ENCODE measurements at regions of chr16 and their contacts with region 1.

Region 1: DNA sequence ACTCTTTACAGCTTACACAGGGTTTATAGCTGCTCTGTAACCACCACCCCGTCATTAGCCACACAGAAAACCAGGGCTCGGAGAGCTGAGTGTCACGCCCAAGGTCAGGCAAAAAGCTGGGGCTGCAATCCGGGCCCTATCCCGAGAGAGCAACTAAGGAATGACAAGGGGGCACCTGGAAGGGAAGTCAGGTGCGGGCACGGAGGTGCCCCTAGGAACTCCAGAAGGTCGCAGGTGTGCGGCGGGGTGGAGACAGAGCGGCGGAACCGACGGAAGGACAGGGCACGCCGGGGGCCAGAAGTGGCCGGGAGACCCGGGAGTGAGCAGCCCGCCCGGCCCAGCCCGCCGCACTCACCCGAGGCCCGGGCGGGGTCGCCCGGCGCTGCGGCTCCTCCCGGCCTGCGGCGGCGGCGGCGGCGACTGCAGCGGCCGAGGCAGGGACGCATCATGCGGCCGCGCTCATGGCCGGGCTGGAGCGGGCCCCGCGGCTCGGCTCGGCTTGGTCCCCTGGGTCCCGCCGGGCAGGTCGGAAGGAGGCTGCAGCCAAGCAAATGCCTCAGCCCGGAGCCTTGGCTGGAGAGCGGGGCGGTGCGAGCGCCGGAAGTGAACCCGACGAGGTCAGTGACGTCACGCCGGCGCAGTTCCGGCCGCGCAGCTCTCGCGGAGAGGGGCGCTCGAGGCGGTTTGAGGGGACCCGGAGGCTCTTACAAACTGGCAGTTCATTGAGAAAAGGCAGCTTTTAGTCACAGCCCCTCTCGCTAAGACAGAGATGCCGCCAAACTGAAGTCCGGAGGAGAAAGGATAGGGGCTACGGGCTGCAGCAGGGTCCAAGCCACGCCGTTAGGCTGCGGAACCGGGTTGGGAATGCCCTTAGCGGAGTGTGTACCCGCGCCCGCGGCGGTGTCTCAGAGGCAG is at the start of gene ZDHHC7:
- DNase-seq: peak; percentile 87
- H3K4me3 Mint-ChIP-seq: peak within 1 kb of the TSS; percentile 98
- H3K27ac Mint-ChIP-seq: peak within 1 kb of the TSS; percentile 94
- H3K4me1 Mint-ChIP-seq: peaks cover 38% of the 10 kb centered on the region
- H3K27me3 Mint-ChIP-seq: peaks cover 2% of the 10 kb centered on the region
- total RNA-seq, gene ZDHHC7: 24.6 to 25.1 TPM

Region 2: DNA sequence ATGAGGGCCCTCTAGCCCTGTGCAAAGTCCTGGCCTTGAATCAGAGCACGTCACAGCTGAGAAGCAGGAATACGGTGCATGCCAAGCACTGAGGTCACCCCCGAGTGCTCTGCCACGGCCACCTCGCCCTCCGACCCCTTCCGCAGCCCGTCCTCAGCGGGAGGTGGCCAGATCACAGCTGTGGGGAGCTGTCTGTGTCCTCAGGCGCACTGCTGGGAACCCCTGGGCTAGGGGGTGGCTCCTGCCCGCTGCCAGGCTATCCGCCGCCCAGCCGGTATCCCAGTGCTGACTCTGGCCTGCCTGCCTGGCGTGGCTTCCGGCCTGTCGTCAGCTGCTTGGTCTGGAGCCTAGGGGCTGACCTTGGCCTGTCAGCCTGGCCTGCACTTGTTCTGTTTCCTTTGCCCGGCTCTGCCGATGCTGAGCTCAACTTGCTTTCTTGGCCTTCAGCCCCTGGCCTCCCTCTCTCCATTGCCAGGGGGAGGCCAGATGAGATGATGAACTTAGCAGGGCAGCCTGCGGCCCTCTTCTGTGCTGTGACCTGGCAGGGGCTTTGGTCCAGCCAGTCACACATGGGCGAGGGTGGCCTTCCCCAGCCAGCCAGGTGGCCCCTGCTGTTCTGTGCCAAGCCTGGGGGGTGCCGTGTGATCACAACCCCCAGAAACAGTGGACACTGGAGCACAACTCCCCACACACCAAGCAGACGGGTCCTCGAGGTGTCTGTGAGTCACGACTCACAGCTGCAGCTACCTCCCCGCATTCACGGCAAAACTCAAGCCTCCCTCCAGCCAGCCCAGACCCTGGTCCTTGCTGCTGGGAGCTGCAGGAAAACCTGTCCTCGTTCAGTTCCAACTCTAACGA is 77.2 kb before region 1 on chr16:
- CTCF ChIA-PET with region 1: no interaction called
- POLR2A ChIA-PET with region 1: no interaction called
- DNase-seq: no peak
- H3K4me3 Mint-ChIP-seq: no peak overlapping the region
- H3K27ac Mint-ChIP-seq: no peak overlapping the region
- H3K4me1 Mint-ChIP-seq: no peaks in the 10 kb centered on the region
- H3K27me3 Mint-ChIP-seq: no peaks in the 10 kb centered on the region

Region 3: GRCh38 chr16:84979516-84979915 is 31.7 kb before region 1 on chr16:
- CTCF ChIA-PET with region 1: no interaction called
- POLR2A ChIA-PET with region 1: no interaction called
- DNase-seq: no peak
- H3K4me3 Mint-ChIP-seq: no peak overlapping the region
- H3K27ac Mint-ChIP-seq: no peak overlapping the region
- H3K4me1 Mint-ChIP-seq: no peaks in the 10 kb centered on the region
- H3K27me3 Mint-ChIP-seq: no peaks in the 10 kb centered on the region

Region 4: DNA sequence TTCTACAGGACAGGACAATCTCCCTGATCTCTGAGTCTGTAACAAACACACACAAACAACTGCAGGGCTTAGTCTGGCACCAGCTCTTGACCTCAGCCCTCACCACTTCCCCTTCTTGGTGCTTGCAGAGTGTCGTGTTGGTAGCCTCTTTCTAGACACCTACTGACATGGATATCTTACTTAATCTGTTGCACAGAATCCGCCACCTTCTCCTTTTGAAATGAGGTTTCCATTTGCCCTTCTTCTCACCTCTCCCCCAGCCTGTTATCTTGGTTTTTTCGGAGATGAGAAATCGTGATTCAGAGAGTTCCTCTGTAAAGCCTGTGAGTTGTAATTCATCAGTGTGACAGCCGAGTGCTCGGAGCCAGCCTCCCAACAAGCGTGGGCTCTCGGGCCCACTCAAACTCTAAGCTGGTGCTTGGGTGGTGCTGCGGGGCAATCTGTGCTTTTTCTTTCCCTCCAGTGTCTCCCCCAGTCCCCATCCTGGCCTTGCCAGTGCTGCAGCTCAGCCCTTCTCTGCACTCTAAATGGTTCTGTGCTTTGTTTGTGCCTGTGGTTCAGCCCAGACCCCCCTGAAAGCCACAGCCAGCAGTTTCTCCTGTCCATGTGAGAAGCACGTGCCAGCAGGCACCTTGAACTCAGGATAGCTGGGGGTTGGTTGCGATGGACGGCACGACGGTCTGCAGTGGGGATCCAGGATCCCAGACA is 44.5 kb after region 1 on chr16:
- CTCF ChIA-PET with region 1: interaction called, 5 read pairs
- POLR2A ChIA-PET with region 1: interaction called, 12 read pairs
- DNase-seq: peak; percentile 92
- H3K4me3 Mint-ChIP-seq: peak overlapping the region; percentile 21
- H3K27ac Mint-ChIP-seq: peak overlapping the region; percentile 66
- H3K4me1 Mint-ChIP-seq: peaks cover 32% of the 10 kb centered on the region
- H3K27me3 Mint-ChIP-seq: peaks cover 12% of the 10 kb centered on the region

Region 5: GRCh38 chr16:85086347-85087291 is 75.4 kb after region 1 on chr16:
- CTCF ChIA-PET with region 1: interaction called, 22 read pairs
- POLR2A ChIA-PET with region 1: interaction called, 3 read pairs
- DNase-seq: peak; percentile 78
- H3K4me3 Mint-ChIP-seq: no peak overlapping the region
- H3K27ac Mint-ChIP-seq: no peak overlapping the region
- H3K4me1 Mint-ChIP-seq: no peaks in the 10 kb centered on the region
- H3K27me3 Mint-ChIP-seq: no peaks in the 10 kb centered on the region

Measured in activated CD4-positive, alpha-beta memory T cell treated with anti-CD3 and anti-CD28 coated beads, Interleukin-2, amount 10 ng/mL, durations not matched to agents 7 days and 5 days (primary cell).